ENCODE measurements at regions of chr12 and their contacts with region 1.

Region 1: GRCh38 chr12:63843721-63844390 is 644 bp upstream of the SRGAP1 start:
- DNase-seq: peak; percentile 91 to 95 (median 94)
- H3K4me3 ChIP-seq: peak overlapping the region in 3 of 4 donors; percentile 38 to 76 (median 45)
- H3K27ac ChIP-seq: peak overlapping the region; percentile 61 to 96 (median 90)
- H3K4me1 ChIP-seq: peaks cover 3 to 25% of the 10 kb centered on the region in 2 donors
- H3K27me3 ChIP-seq: no peaks in the 10 kb centered on the region
- CTCF ChIP-seq: peak; percentile 50 to 99 (median 88)
- POLR2A ChIP-seq: peak; percentile 79

Region 2: DNA sequence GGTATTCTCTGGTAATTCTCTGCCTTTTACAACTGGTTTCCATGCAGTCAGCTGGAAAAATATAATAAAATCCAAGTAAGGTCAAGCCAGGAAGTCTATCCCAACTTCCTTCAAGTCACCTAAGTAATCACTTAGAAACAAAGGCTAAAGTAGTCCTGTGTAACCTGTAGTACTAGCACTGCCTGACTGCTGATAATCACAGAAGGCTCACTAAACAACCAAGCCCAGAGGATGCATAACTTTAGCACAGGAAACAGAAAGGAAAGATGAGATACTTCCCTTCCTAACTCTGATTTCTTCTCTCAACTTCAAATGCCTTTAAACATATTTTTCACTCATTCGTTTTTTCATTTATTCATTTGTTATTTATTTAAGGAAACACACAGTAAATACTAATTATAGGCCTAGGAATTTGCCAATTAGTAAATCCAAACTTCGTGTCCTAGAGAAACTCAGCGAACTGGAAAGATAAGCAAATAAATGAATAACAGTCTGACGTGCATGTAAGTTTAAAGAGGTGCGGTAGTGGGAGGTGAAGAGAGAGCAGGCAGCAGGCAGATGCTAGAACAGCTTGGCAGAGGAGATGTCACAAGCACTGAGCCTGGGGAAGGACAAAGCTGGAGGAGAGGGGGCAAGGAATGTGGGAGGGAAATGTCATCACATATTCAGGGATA is 403.9 kb before region 1 on chr12:
- intact Hi-C with region 1: no loop called
- DNase-seq: no peak
- H3K4me3 ChIP-seq: no peak overlapping the region
- H3K27ac ChIP-seq: no peak overlapping the region
- H3K4me1 ChIP-seq: no peaks in the 10 kb centered on the region
- H3K27me3 ChIP-seq: no peaks in the 10 kb centered on the region
- CTCF ChIP-seq: no peak
- POLR2A ChIP-seq: no peak

Region 3: DNA sequence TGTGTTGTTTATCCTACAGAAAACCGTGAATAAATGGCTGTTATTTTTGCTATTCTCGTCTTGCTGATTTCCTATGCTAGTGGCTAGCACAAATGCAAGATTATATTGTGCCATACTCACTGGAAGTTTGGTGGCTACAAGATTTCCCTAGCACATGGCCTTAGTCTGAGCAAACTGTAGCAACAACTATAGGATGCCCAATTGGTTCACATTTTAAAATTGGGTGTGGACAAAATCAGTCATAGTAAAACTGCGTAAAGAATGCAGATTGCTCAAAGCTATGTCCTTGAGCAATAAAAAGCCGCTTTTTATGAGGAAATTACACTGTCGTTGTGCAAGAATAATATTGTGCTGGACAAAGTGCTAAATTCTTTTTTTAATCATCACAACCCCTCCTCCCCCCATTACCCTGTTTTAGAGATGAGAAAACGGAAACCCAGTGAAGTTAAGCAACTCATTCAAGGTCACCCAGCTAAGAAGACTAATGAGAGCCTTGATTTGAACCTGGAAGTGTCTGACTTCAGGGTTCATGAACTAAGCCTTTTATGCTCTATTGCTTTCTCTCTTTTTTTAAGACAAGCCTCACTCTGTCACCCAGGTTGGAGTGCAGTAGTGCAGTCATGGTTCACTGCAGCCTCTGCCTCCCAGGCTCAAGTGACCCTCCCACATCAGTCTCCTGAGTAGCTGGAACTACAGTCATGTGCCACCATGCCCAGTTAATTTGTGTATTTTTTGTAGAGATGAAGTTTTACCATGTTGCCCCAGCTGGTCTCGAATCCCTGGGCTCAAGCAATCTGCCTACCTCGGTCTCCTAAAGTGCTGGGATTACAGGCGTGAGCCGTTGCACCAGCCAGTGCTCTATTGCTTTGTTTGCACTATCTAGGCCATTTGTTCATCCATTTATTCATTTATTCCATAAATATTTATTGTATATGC is 74.3 kb after region 1 on chr12:
- intact Hi-C with region 1: loop called in 1 of 2 experiments (anchors 10 kb)
- DNase-seq: peak; percentile 30 to 76 (median 63)
- H3K4me3 ChIP-seq: peak overlapping the region in 1 of 4 donors; percentile 1
- H3K27ac ChIP-seq: peak overlapping the region; percentile 46 to 94 (median 69)
- H3K4me1 ChIP-seq: peaks cover 30 to 53% of the 10 kb centered on the region in 2 donors
- H3K27me3 ChIP-seq: no peaks in the 10 kb centered on the region
- CTCF ChIP-seq: peak in 1 of 6 experiments; percentile 8
- POLR2A ChIP-seq: no peak

Region 4: GRCh38 chr12:63940310-63941005 is 96.6 kb after region 1 on chr12:
- intact Hi-C with region 1: loop called in 1 of 2 experiments (anchors 10 kb)
- DNase-seq: peak in 1 of 7 donors; percentile 36
- H3K4me3 ChIP-seq: no peak overlapping the region
- H3K27ac ChIP-seq: peak overlapping the region in 3 of 5 donors; percentile 36 to 67 (median 48)
- H3K4me1 ChIP-seq: peaks cover 0 to 17% of the 10 kb centered on the region in 2 donors
- H3K27me3 ChIP-seq: no peaks in the 10 kb centered on the region
- CTCF ChIP-seq: no peak
- POLR2A ChIP-seq: no peak

Region 5: GRCh38 chr12:64181504-64182291 is 337.8 kb after region 1 on chr12:
- intact Hi-C with region 1: loop called (anchors 2 to 5 kb)
- DNase-seq: peak; percentile 59 to 84 (median 71)
- H3K4me3 ChIP-seq: peak overlapping the region in 1 of 4 donors; percentile 10
- H3K27ac ChIP-seq: peak overlapping the region; percentile 57 to 83 (median 69)
- H3K4me1 ChIP-seq: peaks cover 9 to 24% of the 10 kb centered on the region in 2 donors
- H3K27me3 ChIP-seq: no peaks in the 10 kb centered on the region
- CTCF ChIP-seq: peak; percentile 43 to 82 (median 66)
- POLR2A ChIP-seq: peak in 1 of 2 donors; percentile 45